ENCODE measurements at regions of chr3 and their contacts with region 1.

Region 1: GRCh38 chr3:131072845-131073244 is 46.2 kb downstream of the NEK11 start:
- DNase-seq: no peak
- ATAC-seq: no peak
- H3K4me3 ChIP-seq: no peak overlapping the region
- H3K27ac ChIP-seq: no peak overlapping the region
- H3K4me1 ChIP-seq: no peaks in the 10 kb centered on the region
- H3K27me3 ChIP-seq: no peaks in the 10 kb centered on the region
- CTCF ChIP-seq: no peak

Region 2: DNA sequence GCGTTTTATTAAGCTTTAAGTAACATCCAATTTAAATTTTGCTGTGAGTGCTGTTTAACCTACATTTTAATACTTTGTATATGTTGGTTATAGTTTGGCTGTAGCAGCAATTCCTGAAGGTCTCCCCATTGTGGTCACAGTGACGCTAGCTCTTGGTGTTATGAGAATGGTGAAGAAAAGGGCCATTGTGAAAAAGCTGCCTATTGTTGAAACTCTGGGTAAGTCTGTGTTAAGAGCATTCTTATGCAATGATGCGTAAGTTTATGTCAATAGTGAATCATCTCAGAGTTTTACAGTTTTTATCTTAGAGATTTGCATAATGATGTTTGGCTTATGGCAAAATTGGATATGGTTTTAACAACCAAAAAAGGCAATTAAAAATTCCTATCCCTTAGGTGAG is 109.0 kb before region 1 on chr3:
- CTCF ChIA-PET with region 1: interaction called, 15 read pairs
- POLR2A ChIA-PET with region 1: no interaction called
- in situ Hi-C with region 1: no loop called
- intact Hi-C with region 1: no loop called
- DNase-seq: peak; percentile 89
- ATAC-seq: peak; percentile 96
- H3K4me3 ChIP-seq: no peak overlapping the region
- H3K27ac ChIP-seq: peak overlapping the region; percentile 24
- H3K4me1 ChIP-seq: peaks cover 8% of the 10 kb centered on the region
- H3K27me3 ChIP-seq: no peaks in the 10 kb centered on the region
- CTCF ChIP-seq: no peak